MCF 10A (cell line): ENCODE measurements at regions of chr10 and their contacts with region 1.

Region 1: GRCh38 chr10:24310104-24310503 is 101.2 kb downstream of the KIAA1217 start:
- DNase-seq: no peak
- H3K4me3 Mint-ChIP-seq: no peak overlapping the region
- H3K27ac Mint-ChIP-seq: no peak overlapping the region
- H3K4me1 Mint-ChIP-seq: peaks cover 18% of the 10 kb centered on the region
- H3K27me3 Mint-ChIP-seq: no peaks in the 10 kb centered on the region
- CTCF ChIP-seq: no peak

Region 2: GRCh38 chr10:24272374-24272773 is 37.7 kb before region 1 on chr10:
- CTCF ChIA-PET with region 1: no interaction called
- POLR2A ChIA-PET with region 1: no interaction called
- intact Hi-C with region 1: no loop called
- DNase-seq: no peak
- H3K4me3 Mint-ChIP-seq: no peak overlapping the region
- H3K27ac Mint-ChIP-seq: no peak overlapping the region
- H3K4me1 Mint-ChIP-seq: peaks cover 1% of the 10 kb centered on the region
- H3K27me3 Mint-ChIP-seq: no peaks in the 10 kb centered on the region
- CTCF ChIP-seq: no peak

Region 3: DNA sequence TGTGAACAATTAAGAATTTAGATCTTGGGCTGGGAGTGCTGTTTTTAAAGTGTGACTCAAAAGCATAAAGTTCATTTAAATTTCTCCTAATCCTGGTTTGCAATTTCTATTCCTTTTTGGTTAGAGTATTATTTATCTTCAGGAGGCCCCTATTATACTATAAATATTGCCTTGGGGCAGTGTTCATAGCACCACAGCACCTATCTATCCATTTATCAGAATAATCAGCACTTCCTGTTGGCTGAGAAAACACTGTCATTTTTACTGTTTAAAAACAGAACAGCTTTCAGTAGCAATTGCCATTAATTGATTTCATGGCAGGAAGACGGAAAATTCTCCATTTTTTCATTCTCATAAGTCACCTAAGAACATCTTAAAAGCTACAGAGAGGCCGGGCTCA is 10.3 kb after region 1 on chr10:
- CTCF ChIA-PET with region 1: interaction called, 10 read pairs
- POLR2A ChIA-PET with region 1: interaction called, 4 read pairs
- intact Hi-C with region 1: no loop called
- DNase-seq: no peak
- H3K4me3 Mint-ChIP-seq: no peak overlapping the region
- H3K27ac Mint-ChIP-seq: no peak overlapping the region
- H3K4me1 Mint-ChIP-seq: peaks cover 18% of the 10 kb centered on the region
- H3K27me3 Mint-ChIP-seq: no peaks in the 10 kb centered on the region
- CTCF ChIP-seq: no peak